H1 (cell line): ENCODE measurements at regions of chr5 and their contacts with region 1.

Region 1: GRCh38 chr5:114018186-114018585 is 343.7 kb upstream of the KCNN2 start:
- DNase-seq: no peak
- H3K4me3 ChIP-seq: no peak overlapping the region
- H3K27ac ChIP-seq: no peak overlapping the region
- H3K4me1 ChIP-seq: no peaks in the 10 kb centered on the region
- H3K27me3 ChIP-seq: no peaks in the 10 kb centered on the region
- CTCF ChIP-seq: peak in 2 of 3 experiments; percentile 49 to 56; a peak in 3 of 4 replicates
- EP300 ChIP-seq: no peak
- POLR2A ChIP-seq: no peak
- RAD21 ChIP-seq: peak; percentile 78 to 79

Region 2: GRCh38 chr5:113776832-113777525 is 241.2 kb before region 1 on chr5:
- CTCF ChIA-PET with region 1: no interaction called
- POLR2A ChIA-PET with region 1: no interaction called
- DNase-seq: no peak
- H3K4me3 ChIP-seq: 0 out of 8 replicates have a peak overlapping the region, but pooled peaks of 1 of the 4 experiments have one; percentile 26
- H3K27ac ChIP-seq: 0 out of 2 replicates have a peak overlapping the region, but pooled peaks have one; percentile 35
- H3K4me1 ChIP-seq: peaks cover 2 to 13% (median 4%) of the 10 kb centered on the region in 4 experiments; a peak in 4 of 7 replicates
- H3K27me3 ChIP-seq: no peaks in the 10 kb centered on the region
- CTCF ChIP-seq: no peak
- EP300 ChIP-seq: no peak
- POLR2A ChIP-seq: no peak
- RAD21 ChIP-seq: no peak

Region 3: DNA sequence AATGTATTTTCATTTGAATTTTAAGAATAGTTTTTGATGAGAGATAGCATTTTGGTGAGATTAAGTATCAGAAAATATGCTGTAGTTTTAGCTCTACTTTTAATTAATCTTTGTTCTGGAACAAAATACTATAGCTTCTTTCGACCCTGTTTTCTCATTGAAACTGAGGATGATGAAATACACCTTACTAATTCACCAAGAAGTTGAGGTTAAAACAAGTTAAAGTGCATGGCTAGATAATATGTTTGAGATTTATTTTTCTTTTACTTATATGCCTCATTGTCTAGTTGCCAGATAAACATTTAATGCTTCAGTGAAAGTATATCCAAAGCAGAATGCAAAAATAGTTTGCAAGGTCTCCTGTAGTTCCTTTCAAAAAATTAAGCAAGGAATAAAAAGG is 203.6 kb after region 1 on chr5:
- CTCF ChIA-PET with region 1: no interaction called
- POLR2A ChIA-PET with region 1: no interaction called
- DNase-seq: no peak
- H3K4me3 ChIP-seq: no peak overlapping the region
- H3K27ac ChIP-seq: no peak overlapping the region
- H3K4me1 ChIP-seq: no peaks in the 10 kb centered on the region
- H3K27me3 ChIP-seq: no peaks in the 10 kb centered on the region
- CTCF ChIP-seq: no peak
- EP300 ChIP-seq: no peak
- POLR2A ChIP-seq: no peak
- RAD21 ChIP-seq: no peak

Region 4: GRCh38 chr5:114361724-114362196 is 343.6 kb after region 1 on chr5 and contains the start of gene KCNN2:
- CTCF ChIA-PET with region 1: interaction called, 10 read pairs
- POLR2A ChIA-PET with region 1: no interaction called
- DNase-seq: peak in 1 of 2 experiments; percentile 87
- H3K4me3 ChIP-seq: peak within 1 kb of the TSS; percentile 83 to 90 (median 88)
- H3K27ac ChIP-seq: peak within 1 kb of the TSS; percentile 92
- H3K4me1 ChIP-seq: peaks cover 0 to 9% (median under 1%) of the 10 kb centered on the region in 4 experiments; a peak in 3 of 7 replicates
- H3K27me3 ChIP-seq: peaks cover 0 to 4% (median 0%) of the 10 kb centered on the region in 4 experiments; a peak in 1 of 7 replicates
- CTCF ChIP-seq: no peak
- EP300 ChIP-seq: no peak; a peak in 1 of 3 replicates
- POLR2A ChIP-seq: peak; percentile 48 to 60; a peak in 2 of 3 replicates
- RAD21 ChIP-seq: no peak
- total RNA-seq, gene KCNN2: 18.6 and 19.4 TPM in 2 replicates

Region 5: GRCh38 chr5:114407783-114408182 is 389.6 kb after region 1 on chr5:
- CTCF ChIA-PET with region 1: no interaction called
- POLR2A ChIA-PET with region 1: no interaction called
- DNase-seq: no peak
- H3K4me3 ChIP-seq: no peak overlapping the region
- H3K27ac ChIP-seq: no peak overlapping the region
- H3K4me1 ChIP-seq: peaks cover 3 to 10% (median 4%) of the 10 kb centered on the region in 4 experiments; a peak in 6 of 7 replicates
- H3K27me3 ChIP-seq: no peaks in the 10 kb centered on the region
- CTCF ChIP-seq: no peak
- EP300 ChIP-seq: no peak
- POLR2A ChIP-seq: no peak
- RAD21 ChIP-seq: no peak